GM12878 (cell line): ENCODE measurements at regions of chr1 and their contacts with region 1.

Region 1: GRCh38 chr1:156625436-156626078 is 6.3 kb downstream of the HAPLN2 start:
- DNase-seq: no peak
- ATAC-seq: peak; percentile 78
- H3K4me3 ChIP-seq: no peak overlapping the region
- H3K27ac ChIP-seq: no peak overlapping the region
- H3K4me1 ChIP-seq: no peaks in the 10 kb centered on the region
- H3K27me3 ChIP-seq: peaks cover 10 to 20% of the 10 kb centered on the region in 2 experiments
- CTCF ChIP-seq: peak; percentile 75 to 93 (median 80)
- EP300 ChIP-seq: no peak
- POLR2A ChIP-seq: no peak
- RAD21 ChIP-seq: peak; percentile 64

Region 2: DNA sequence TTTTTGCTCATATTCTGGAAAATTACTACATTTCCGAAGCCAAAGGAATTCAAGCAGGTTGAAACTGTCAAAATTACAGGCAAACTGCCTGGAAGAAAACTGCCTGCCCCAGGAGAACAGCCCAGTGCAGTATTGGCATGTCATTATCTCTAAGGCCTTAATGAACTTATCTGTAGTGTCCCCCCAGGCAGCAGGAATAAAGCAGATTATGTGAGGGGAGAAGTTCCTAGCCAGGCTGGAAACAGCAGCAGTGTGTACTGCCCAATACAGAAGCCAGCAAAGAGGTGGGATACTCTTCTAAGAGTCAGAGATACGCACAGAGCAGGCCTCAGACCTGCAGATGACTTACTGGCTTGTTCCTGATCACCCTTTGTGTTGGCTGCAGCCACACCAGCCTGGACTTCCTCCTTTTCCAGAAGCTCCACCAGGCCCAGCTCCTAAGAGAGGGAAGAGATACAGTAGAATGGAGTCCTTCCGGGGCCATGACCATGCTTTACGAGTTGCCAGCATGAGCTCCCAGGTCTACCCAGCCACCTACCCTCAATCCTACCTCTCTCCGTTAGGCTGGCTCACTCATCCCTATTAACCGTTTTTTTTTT is 64.9 kb before region 1 on chr1:
- CTCF ChIA-PET with region 1: no interaction called
- POLR2A ChIA-PET with region 1: no interaction called
- RAD21 ChIA-PET with region 1: no interaction called
- SMC1A ChIA-PET with region 1: no interaction called
- in situ Hi-C with region 1: no loop called
- intact Hi-C with region 1: no loop called
- DNase-seq: no peak
- ATAC-seq: no peak
- H3K4me3 ChIP-seq: no peak overlapping the region
- H3K27ac ChIP-seq: no peak overlapping the region
- H3K4me1 ChIP-seq: no peaks in the 10 kb centered on the region
- H3K27me3 ChIP-seq: no peaks in the 10 kb centered on the region
- CTCF ChIP-seq: no peak
- EP300 ChIP-seq: no peak
- POLR2A ChIP-seq: no peak
- RAD21 ChIP-seq: no peak

Region 3: DNA sequence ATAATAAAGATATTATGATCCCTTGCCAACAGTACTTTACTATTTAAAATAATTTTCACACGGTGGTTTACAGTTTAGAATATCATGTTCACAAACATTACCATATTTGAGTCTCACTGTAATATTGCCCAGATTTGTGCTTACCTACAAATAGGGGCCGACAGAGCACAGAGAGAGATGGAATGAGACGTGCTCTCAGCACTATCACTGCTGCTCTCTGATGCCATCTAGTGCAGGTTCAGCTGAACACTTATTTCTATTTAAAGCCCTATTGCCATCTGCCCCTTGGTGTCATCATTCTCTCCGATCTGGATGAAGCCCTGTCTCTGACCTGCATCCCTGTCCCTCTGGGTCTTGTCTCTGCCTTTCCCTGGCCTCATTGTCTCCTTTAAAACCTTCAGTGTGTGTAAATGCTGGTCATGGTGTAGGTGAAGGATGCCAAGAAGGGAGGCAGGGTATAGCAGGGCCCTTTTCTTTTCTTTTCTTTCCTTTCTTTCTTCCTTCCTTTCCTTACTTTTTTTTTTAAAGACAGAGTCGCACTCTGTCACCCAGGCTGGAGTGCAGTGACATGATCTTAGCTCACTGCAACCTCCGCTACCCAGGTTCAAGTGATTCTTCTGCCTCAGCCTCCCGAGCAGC is 17.4 kb before region 1 on chr1:
- CTCF ChIA-PET with region 1: interaction called, 23 read pairs
- POLR2A ChIA-PET with region 1: no interaction called
- RAD21 ChIA-PET with region 1: interaction called, 4 read pairs
- SMC1A ChIA-PET with region 1: interaction called, 7 read pairs
- in situ Hi-C with region 1: no loop called
- intact Hi-C with region 1: no loop called
- DNase-seq: peak; percentile 62
- ATAC-seq: peak; percentile 99
- H3K4me3 ChIP-seq: no peak overlapping the region
- H3K27ac ChIP-seq: no peak overlapping the region
- H3K4me1 ChIP-seq: 0 out of 2 replicates have a peak, but pooled peaks cover 4% of the 10 kb centered on the region
- H3K27me3 ChIP-seq: peaks cover 0 to 3% of the 10 kb centered on the region in 2 experiments; a peak in 2 of 4 replicates
- CTCF ChIP-seq: peak; percentile 75 to 93 (median 78)
- EP300 ChIP-seq: no peak
- POLR2A ChIP-seq: no peak
- RAD21 ChIP-seq: peak; percentile 80

Region 4: GRCh38 chr1:156652131-156652991 is 26.8 kb after region 1 on chr1:
- CTCF ChIA-PET with region 1: interaction called, 208 read pairs
- POLR2A ChIA-PET with region 1: no interaction called
- RAD21 ChIA-PET with region 1: interaction called, 10 read pairs
- SMC1A ChIA-PET with region 1: interaction called, 6 read pairs
- in situ Hi-C with region 1: no loop called
- intact Hi-C with region 1: loop called (anchors 1 kb)
- DNase-seq: no peak
- ATAC-seq: no peak
- H3K4me3 ChIP-seq: no peak overlapping the region
- H3K27ac ChIP-seq: no peak overlapping the region
- H3K4me1 ChIP-seq: peaks cover 9% of the 10 kb centered on the region
- H3K27me3 ChIP-seq: 0 out of 4 replicates have a peak, but pooled peaks cover 0 to 2% of the 10 kb centered on the region in 2 experiments
- CTCF ChIP-seq: no peak
- EP300 ChIP-seq: no peak
- POLR2A ChIP-seq: no peak
- RAD21 ChIP-seq: no peak

Region 5: DNA sequence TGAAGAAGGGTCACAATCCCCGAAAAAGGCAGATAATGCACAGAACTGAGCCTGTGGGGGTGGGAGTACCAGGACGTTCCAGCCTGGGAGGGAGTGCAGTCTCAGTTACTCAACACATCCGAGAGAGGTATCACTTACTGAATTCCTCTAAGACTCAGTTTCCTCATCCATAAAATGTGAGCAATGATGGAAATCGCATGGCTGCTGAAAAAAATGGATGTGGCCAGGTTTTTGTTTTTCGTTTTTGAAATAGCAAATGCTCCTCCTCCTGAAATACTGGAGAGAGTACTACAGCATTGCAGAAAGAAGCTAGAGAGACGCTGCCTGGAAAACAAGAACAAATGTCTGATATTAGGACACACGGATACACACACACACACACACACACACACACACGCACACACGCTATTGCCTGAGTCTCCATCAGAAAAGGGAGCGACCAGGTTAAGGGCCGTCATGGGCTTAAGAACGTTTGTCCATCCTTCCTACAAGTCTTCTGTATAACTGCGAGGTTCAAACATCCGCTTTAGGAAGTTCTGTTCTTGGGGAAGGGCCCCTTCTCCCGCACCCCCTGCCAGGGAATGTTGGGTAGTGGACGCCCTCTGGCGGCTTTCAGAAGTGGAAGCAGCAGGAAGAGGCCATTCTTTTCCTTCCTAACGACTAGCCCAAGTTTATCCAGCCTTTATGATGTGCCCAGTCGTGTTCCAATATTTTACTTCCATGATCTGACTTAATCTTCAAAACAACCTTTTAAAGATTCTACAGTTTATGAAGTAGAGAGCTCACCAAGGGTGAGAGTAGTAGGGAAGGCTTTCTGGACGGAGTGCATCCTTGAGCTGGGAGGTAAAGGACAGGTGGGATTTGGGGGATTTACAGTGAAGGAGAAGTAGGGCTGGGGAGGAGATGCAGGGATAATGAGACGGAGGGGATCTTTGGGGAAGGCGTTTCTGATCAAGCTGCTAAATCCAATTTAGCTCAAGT is 52.3 kb after region 1 on chr1:
- CTCF ChIA-PET with region 1: interaction called, 52 read pairs
- POLR2A ChIA-PET with region 1: interaction called, 7 read pairs
- RAD21 ChIA-PET with region 1: interaction called, 6 read pairs
- SMC1A ChIA-PET with region 1: interaction called, 6 read pairs
- in situ Hi-C with region 1: no loop called
- intact Hi-C with region 1: loop called (anchors 1 kb)
- DNase-seq: no peak
- ATAC-seq: peak; percentile 70
- H3K4me3 ChIP-seq: no peak overlapping the region
- H3K27ac ChIP-seq: no peak overlapping the region
- H3K4me1 ChIP-seq: peaks cover 9% of the 10 kb centered on the region
- H3K27me3 ChIP-seq: peaks cover 16 to 21% of the 10 kb centered on the region in 2 experiments
- CTCF ChIP-seq: peak; percentile 79 to 86 (median 83)
- EP300 ChIP-seq: no peak
- POLR2A ChIP-seq: no peak
- RAD21 ChIP-seq: peak; percentile 96

Region 6: GRCh38 chr1:156892190-156893047 is 266.9 kb after region 1 on chr1:
- CTCF ChIA-PET with region 1: interaction called, 13 read pairs
- POLR2A ChIA-PET with region 1: interaction called, 4 read pairs
- RAD21 ChIA-PET with region 1: interaction called, 3 read pairs
- SMC1A ChIA-PET with region 1: interaction called, 4 read pairs
- in situ Hi-C with region 1: no loop called
- intact Hi-C with region 1: no loop called
- DNase-seq: no peak
- ATAC-seq: peak; percentile 95
- H3K4me3 ChIP-seq: no peak overlapping the region
- H3K27ac ChIP-seq: no peak overlapping the region
- H3K4me1 ChIP-seq: no peaks in the 10 kb centered on the region
- H3K27me3 ChIP-seq: peaks cover 5 to 11% of the 10 kb centered on the region in 2 experiments
- CTCF ChIP-seq: peak; percentile 63 to 87 (median 68)
- EP300 ChIP-seq: no peak
- POLR2A ChIP-seq: no peak
- RAD21 ChIP-seq: peak; percentile 38; the same call in 1 of the 2 replicates